OCI-LY7 (cell line): ENCODE measurements at regions of chr21 and their contacts with region 1.

Region 1: GRCh38 chr21:42467140-42467983 is 28.7 kb downstream of the RSPH1 start:
- DNase-seq: peak; percentile 58
- H3K4me3 ChIP-seq: no peak overlapping the region
- H3K27ac ChIP-seq: no peak overlapping the region
- H3K4me1 ChIP-seq: peaks cover 87% of the 10 kb centered on the region
- CTCF ChIP-seq: peak; percentile 66

Region 2: GRCh38 chr21:41868062-41868710 is 599.2 kb before region 1 on chr21:
- CTCF ChIA-PET with region 1: no interaction called
- POLR2A ChIA-PET with region 1: no interaction called
- intact Hi-C with region 1: loop called (anchors 10 kb)
- DNase-seq: peak; percentile 96
- H3K4me3 ChIP-seq: peak overlapping the region; percentile 58
- H3K27ac ChIP-seq: peak overlapping the region; percentile 96
- H3K4me1 ChIP-seq: peaks cover 98% of the 10 kb centered on the region
- CTCF ChIP-seq: no peak

Region 3: DNA sequence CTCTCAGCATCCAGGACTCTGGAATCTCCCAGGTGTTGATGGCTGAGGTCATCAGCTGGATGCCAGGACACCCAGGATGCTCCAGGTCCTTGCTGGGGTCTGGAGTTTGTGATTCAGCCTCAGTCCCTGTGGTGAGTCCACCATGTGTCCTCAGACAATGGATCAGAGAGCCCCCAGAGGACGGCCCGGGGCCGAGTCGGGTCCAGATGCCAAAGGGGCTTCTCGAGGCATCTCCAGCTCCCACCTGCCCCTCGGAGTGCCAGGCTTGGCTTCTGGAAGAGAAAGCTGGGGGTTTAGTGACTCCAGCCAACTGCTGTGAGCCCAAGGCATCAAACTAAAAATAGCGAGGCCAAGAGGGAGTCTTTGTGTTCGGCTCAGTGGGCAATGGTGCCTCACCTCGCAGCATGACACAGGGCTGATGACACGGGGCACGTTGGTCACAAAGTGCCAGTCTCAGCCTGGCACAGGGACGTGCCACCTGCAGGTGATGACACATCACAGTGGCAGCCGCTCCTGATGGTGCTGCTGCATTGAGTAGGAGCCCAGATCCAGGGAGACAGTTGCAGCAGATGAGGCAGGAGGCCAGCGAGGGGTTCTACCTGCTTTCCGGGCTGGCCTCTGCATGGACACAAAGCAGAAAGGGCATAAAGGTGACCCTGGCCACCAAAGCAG is 196.6 kb after region 1 on chr21:
- CTCF ChIA-PET with region 1: no interaction called
- POLR2A ChIA-PET with region 1: no interaction called
- intact Hi-C with region 1: loop called (anchors 5 kb)
- DNase-seq: no peak
- H3K4me3 ChIP-seq: no peak overlapping the region
- H3K27ac ChIP-seq: no peak overlapping the region
- H3K4me1 ChIP-seq: peaks cover 67% of the 10 kb centered on the region
- CTCF ChIP-seq: no peak